ENCODE measurements at regions of chr6 and their contacts with region 1.

Region 1: DNA sequence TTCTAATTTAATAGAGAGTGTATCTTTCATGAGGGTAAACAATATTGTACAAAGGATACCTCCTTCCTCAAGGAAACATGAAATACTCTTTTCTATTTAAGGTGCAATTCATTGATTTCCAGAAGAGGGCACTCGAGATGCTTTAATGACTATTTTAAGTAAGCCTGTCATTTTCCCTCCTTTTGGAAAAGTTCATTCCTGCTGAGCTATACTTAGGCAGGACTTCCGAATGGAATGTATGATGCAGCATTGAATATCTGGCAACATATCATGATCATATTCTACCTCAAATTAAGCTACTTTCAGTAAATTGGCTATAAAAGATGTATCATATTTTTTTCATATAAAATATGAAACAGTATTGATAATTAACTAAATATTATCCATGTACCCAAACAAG is 5.0 kb downstream of the DST start:
- DNase-seq: no peak

Region 2: GRCh38 chr6:56370561-56371211 is 267.0 kb before region 1 on chr6:
- intact Hi-C with region 1: no loop called
- DNase-seq: no peak

Region 3: GRCh38 chr6:56699066-56699654 is 61.5 kb after region 1 on chr6:
- intact Hi-C with region 1: loop called (anchors 2 kb)
- DNase-seq: no peak

Region 4: DNA sequence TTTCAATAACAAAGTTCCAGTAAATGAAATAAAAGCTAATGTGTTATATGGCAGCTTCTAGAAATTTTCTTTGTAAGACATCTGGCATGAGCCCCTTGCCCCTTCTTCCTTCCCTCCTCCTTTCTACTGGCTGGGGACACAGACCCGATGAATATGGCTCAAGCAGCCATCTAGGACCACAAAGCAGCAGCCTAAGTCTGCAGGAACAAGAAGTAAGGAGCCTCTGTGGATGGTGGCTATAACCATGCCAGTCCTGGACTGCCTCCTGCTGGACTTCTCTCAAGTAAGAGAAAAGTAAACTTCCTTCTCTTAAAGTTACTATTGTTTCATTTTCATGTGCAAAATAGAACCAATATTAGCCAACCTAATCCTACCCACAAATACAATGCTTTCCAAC is 119.9 kb after region 1 on chr6:
- intact Hi-C with region 1: loop called (anchors 5 kb)
- DNase-seq: peak in 2 of 10 donors; percentile 51 to 83

Region 5: GRCh38 chr6:56851541-56852259 is 214.1 kb after region 1 on chr6:
- intact Hi-C with region 1: loop called (anchors 2 kb)
- DNase-seq: peak in 8 of 10 donors; percentile 13 to 87 (median 44)

Measured in posterior cingulate gyrus (tissue), 11 donors.